GM12878 (cell line): ENCODE measurements at regions of chr20 and their contacts with region 1.

Region 1: DNA sequence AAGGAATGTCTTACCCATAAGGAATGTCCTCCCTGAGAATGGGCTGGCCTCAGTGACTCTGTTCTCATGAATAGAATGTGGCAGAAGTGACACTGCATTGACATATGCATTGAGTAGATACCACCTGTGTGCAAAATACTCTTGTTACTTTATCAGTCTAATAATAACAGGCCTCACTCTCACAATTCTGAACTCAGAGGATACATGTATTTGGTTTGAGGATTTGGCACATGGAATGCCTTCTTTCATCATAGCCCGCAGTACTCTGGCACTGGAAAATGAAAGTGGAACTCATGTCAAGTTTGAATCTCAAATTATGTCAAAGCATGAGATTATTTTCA is 52.9 kb upstream of the PLCB4 start:
- DNase-seq: no peak
- ATAC-seq: no peak
- H3K4me3 ChIP-seq: no peak overlapping the region
- H3K27ac ChIP-seq: no peak overlapping the region
- H3K4me1 ChIP-seq: no peaks in the 10 kb centered on the region
- H3K27me3 ChIP-seq: no peaks in the 10 kb centered on the region
- CTCF ChIP-seq: no peak
- EP300 ChIP-seq: no peak
- POLR2A ChIP-seq: no peak
- RAD21 ChIP-seq: no peak

Region 2: GRCh38 chr20:8156235-8157079 is 859.5 kb before region 1 on chr20:
- CTCF ChIA-PET with region 1: no interaction called
- POLR2A ChIA-PET with region 1: no interaction called
- RAD21 ChIA-PET with region 1: no interaction called
- SMC1A ChIA-PET with region 1: no interaction called
- in situ Hi-C with region 1: no loop called
- intact Hi-C with region 1: no loop called
- DNase-seq: peak; percentile 23
- ATAC-seq: peak; percentile 90
- H3K4me3 ChIP-seq: no peak overlapping the region
- H3K27ac ChIP-seq: no peak overlapping the region
- H3K4me1 ChIP-seq: no peaks in the 10 kb centered on the region
- H3K27me3 ChIP-seq: no peaks in the 10 kb centered on the region
- CTCF ChIP-seq: no peak
- EP300 ChIP-seq: peak in 1 of 2 experiments; percentile 65; a peak in 1 of 4 replicates
- POLR2A ChIP-seq: no peak
- RAD21 ChIP-seq: no peak

Region 3: GRCh38 chr20:8964959-8965562 is 50.9 kb before region 1 on chr20:
- CTCF ChIA-PET with region 1: no interaction called
- POLR2A ChIA-PET with region 1: no interaction called
- RAD21 ChIA-PET with region 1: no interaction called
- SMC1A ChIA-PET with region 1: no interaction called
- in situ Hi-C with region 1: no loop called
- intact Hi-C with region 1: loop called (anchors 10 kb)
- DNase-seq: no peak
- ATAC-seq: no peak
- H3K4me3 ChIP-seq: no peak overlapping the region
- H3K27ac ChIP-seq: no peak overlapping the region
- H3K4me1 ChIP-seq: no peaks in the 10 kb centered on the region
- H3K27me3 ChIP-seq: no peaks in the 10 kb centered on the region; a peak in 1 of 4 replicates
- CTCF ChIP-seq: no peak
- EP300 ChIP-seq: no peak
- POLR2A ChIP-seq: no peak
- RAD21 ChIP-seq: no peak

Region 4: DNA sequence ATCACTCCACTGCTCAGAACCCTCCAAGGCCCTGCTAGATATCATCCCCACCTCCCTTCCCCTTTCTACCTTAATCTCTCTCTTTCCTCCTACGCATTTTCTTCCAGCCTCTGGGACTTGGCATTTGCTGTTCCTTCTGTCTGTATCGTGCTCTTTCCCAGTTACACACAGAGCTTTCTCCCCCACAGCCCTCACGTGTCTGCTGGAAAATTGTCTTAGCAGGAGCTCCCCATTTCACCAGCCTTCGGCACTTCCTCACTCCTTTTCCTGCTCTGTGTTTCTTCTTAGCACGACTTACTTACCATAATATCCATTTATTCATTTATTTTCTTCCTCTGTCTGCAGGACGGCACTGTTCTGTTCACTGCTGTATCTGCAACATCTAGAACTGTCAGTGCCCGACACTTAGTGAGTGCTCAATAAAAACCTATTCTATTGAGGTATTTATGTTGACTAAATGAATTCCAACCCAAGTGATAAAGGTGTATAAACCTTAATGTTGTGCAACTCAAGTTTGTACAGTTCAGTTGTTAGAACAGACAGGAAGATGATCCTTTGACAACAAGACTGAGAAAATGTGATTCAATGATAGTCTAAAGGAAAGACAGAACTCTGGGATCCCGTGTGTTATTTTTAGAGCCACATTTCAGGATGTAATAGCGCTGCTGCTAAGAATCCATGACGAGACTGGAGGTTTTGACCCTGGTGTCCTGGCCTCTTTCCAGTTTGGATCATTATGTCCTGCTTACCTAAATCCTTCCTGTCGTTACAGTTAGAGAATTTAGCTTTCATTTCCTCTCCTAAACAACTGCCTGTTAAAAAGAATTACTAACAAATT is 328.3 kb after region 1 on chr20:
- CTCF ChIA-PET with region 1: no interaction called
- POLR2A ChIA-PET with region 1: no interaction called
- RAD21 ChIA-PET with region 1: no interaction called
- SMC1A ChIA-PET with region 1: no interaction called
- in situ Hi-C with region 1: no loop called
- intact Hi-C with region 1: no loop called
- DNase-seq: no peak
- ATAC-seq: no peak
- H3K4me3 ChIP-seq: no peak overlapping the region
- H3K27ac ChIP-seq: no peak overlapping the region
- H3K4me1 ChIP-seq: no peaks in the 10 kb centered on the region
- H3K27me3 ChIP-seq: no peaks in the 10 kb centered on the region; a peak in 2 of 4 replicates
- CTCF ChIP-seq: no peak
- EP300 ChIP-seq: no peak
- POLR2A ChIP-seq: no peak
- RAD21 ChIP-seq: no peak